PC-3 (cell line): ENCODE measurements at regions of chr5 and their contacts with region 1.

Region 1: GRCh38 chr5:142720641-142721271 is 34.9 kb upstream of the FGF1 start:
- DNase-seq: peak; percentile 79
- ATAC-seq: peak; percentile 57
- H3K4me3 ChIP-seq: peak overlapping the region; percentile 53; the same call in 1 of the 2 replicates
- H3K27ac ChIP-seq: peak overlapping the region; percentile 79
- H3K4me1 ChIP-seq: peaks cover 29% of the 10 kb centered on the region
- H3K27me3 ChIP-seq: no peaks in the 10 kb centered on the region
- CTCF ChIP-seq: peak; percentile 23; the same call in 1 of the 2 replicates

Region 2: DNA sequence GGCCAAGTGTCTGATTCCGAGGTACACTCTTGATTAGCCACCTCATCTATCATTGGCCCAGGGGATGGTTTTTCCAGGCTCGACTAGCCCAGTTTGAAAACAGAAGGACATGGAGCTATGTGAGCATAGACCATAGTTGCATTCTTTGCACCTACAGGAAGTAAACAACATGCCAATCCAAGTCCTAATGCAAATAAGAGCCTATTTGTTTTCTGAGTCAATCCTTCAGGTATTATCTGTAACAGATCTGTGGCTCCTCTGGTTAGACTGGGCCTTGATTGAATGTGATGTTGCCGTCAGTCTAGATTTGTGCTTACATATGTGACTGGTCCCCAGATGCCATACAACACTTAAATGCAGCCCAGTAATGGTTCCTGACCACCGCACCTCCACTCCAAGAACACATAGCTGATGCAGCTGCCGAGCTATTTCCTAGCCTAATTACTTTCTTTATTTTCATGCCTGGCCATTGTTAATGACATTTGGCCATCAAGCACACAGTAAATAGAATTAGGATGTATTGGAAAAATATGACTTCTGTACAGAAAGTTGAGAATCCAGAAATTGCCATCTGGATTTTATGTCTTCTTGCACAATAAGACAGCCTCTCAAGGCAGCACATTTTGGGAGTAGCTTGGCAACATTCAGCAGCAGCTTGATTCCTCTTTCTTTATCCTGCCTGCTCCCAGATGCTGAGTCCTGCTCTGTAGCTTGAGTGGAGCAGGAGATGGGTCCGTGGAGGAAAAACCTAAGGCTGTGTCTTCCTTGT is 19.9 kb after region 1 on chr5:
- CTCF ChIA-PET with region 1: no interaction called
- POLR2A ChIA-PET with region 1: no interaction called
- intact Hi-C with region 1: loop called (anchors 1 kb)
- DNase-seq: peak; percentile 85
- ATAC-seq: peak; percentile 97
- H3K4me3 ChIP-seq: no peak overlapping the region
- H3K27ac ChIP-seq: peak overlapping the region; percentile 46
- H3K4me1 ChIP-seq: peaks cover 29% of the 10 kb centered on the region
- H3K27me3 ChIP-seq: no peaks in the 10 kb centered on the region
- CTCF ChIP-seq: no peak